PC-9 (cell line): ENCODE measurements at regions of chr7 and their contacts with region 1.

Region 1: GRCh38 chr7:35333265-35333664 is 79.4 kb upstream of the TBX20 start:
- DNase-seq: no peak
- H3K4me3 ChIP-seq: no peak overlapping the region
- H3K27ac ChIP-seq: no peak overlapping the region
- H3K4me1 ChIP-seq: no peaks in the 10 kb centered on the region
- H3K27me3 ChIP-seq: no peaks in the 10 kb centered on the region
- CTCF ChIP-seq: no peak

Region 2: DNA sequence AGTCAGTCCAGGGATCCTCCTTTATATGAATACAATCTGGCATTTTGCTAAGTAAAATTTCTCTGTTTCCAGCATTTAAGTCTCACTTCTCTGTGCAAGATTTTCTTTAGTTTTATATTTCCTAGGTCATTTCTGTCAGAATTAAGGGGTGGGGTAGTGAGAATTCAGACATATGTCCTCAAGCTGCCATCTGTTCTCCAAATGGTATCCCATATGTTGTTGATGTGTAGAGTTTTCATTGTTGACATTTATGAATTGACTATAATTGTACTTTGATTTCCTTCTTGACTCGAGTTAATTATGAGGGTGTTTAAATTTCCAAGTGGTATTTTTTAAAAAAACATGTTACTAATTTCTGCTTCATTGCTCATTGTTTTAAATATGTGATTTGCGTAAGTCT is 526.4 kb before region 1 on chr7:
- CTCF ChIA-PET with region 1: no interaction called
- POLR2A ChIA-PET with region 1: interaction called, 31 read pairs
- intact Hi-C with region 1: no loop called
- DNase-seq: no peak
- H3K4me3 ChIP-seq: no peak overlapping the region
- H3K27ac ChIP-seq: no peak overlapping the region
- H3K4me1 ChIP-seq: no peaks in the 10 kb centered on the region
- H3K27me3 ChIP-seq: no peaks in the 10 kb centered on the region
- CTCF ChIP-seq: no peak